GM12878 (cell line): ENCODE measurements at regions of chr9 and their contacts with region 1.

Region 1: GRCh38 chr9:109520478-109521132 is 22.5 kb upstream of the PTPN3 start:
- DNase-seq: peak; percentile 27
- ATAC-seq: peak; percentile 98
- H3K4me3 ChIP-seq: no peak overlapping the region
- H3K27ac ChIP-seq: no peak overlapping the region
- H3K4me1 ChIP-seq: no peaks in the 10 kb centered on the region
- H3K27me3 ChIP-seq: no peaks in the 10 kb centered on the region; a peak in 2 of 4 replicates
- CTCF ChIP-seq: peak; percentile 90 to 93 (median 90)
- EP300 ChIP-seq: no peak
- POLR2A ChIP-seq: no peak
- RAD21 ChIP-seq: peak; percentile 86

Region 2: DNA sequence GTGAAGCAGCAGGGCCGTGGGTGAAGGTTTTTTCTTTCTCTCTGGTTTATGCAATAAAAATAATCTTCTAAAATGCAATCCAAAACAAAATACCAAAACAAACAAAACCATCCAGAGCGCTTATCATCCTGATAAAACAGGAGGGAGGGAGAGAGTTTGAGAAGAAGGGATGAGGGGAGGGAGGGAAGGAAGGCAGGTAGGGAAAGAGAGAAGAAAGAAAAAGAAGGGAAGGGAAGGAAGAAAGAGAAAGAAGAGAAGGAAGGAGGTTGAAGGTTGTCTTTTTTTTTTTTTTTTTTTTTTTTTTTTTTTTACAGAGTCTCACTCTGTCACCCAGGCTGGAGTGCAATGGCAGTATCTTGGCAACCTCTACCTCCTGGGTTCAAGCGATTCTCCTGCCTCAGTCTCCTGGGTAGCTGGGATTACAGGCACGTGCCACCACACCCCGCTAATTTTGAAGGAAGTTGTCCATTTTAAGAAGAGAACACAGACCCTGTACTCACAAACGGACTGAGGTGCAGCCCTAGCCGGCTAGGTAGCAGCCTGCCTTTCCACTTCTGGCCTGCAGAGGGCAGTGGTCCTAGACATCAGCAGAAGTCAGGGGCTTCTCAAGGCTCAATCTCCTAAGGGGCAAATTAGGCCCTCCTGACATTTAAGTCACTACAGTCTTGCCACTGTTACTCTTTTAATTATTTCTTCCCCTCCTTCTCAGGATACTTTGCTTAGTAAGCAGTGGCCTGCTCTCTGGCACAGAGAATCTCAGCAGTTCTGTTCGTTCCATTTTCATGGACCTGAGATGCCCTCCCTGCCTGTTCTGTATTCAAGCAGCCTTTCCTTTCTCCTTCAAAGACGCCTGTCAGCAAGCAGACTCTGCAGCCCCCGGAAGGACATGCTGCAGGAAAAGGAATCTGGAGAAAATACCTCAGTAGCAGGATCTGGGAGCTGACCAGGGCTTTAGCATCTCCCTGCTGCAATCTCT is 276.2 kb before region 1 on chr9:
- CTCF ChIA-PET with region 1: interaction called, 3 read pairs
- POLR2A ChIA-PET with region 1: no interaction called
- RAD21 ChIA-PET with region 1: interaction called, 3 read pairs
- SMC1A ChIA-PET with region 1: no interaction called
- in situ Hi-C with region 1: no loop called
- intact Hi-C with region 1: loop called (anchors 5 kb)
- DNase-seq: peak; percentile 25
- ATAC-seq: peak; percentile 98
- H3K4me3 ChIP-seq: no peak overlapping the region
- H3K27ac ChIP-seq: no peak overlapping the region
- H3K4me1 ChIP-seq: no peaks in the 10 kb centered on the region
- H3K27me3 ChIP-seq: peaks cover 0 to 2% of the 10 kb centered on the region in 2 experiments; a peak in 1 of 4 replicates
- CTCF ChIP-seq: peak; percentile 83 to 96 (median 95)
- EP300 ChIP-seq: no peak
- POLR2A ChIP-seq: no peak
- RAD21 ChIP-seq: peak; percentile 63

Region 3: DNA sequence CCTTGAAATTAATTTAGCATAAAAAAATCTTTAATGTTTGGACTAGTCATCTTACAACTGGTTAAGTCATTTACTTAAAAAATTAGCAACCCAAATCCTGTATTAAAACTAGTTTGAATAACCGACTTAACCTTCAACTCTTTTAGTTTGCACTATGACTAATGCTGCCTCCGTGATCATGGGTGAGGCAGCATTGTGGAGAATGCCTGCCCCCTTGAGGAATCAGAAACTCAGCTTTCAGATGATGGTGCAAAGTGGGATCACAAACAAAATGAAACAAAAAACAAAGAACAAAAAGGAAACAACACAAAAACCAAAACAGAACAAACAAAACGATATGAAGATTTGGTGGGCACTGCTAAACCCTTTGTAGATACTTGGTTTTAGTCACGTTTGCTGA is 132.4 kb after region 1 on chr9:
- CTCF ChIA-PET with region 1: no interaction called
- POLR2A ChIA-PET with region 1: no interaction called
- RAD21 ChIA-PET with region 1: no interaction called
- SMC1A ChIA-PET with region 1: no interaction called
- in situ Hi-C with region 1: no loop called
- intact Hi-C with region 1: no loop called
- DNase-seq: no peak
- ATAC-seq: no peak
- H3K4me3 ChIP-seq: no peak overlapping the region
- H3K27ac ChIP-seq: no peak overlapping the region
- H3K4me1 ChIP-seq: no peaks in the 10 kb centered on the region
- H3K27me3 ChIP-seq: no peaks in the 10 kb centered on the region
- CTCF ChIP-seq: peak in 2 of 3 experiments; percentile 11 to 19; a peak in 2 of 6 replicates
- EP300 ChIP-seq: no peak
- POLR2A ChIP-seq: no peak
- RAD21 ChIP-seq: no peak